B cell (primary cell): ENCODE measurements at regions of chr2 and their contacts with region 1.

Region 1: DNA sequence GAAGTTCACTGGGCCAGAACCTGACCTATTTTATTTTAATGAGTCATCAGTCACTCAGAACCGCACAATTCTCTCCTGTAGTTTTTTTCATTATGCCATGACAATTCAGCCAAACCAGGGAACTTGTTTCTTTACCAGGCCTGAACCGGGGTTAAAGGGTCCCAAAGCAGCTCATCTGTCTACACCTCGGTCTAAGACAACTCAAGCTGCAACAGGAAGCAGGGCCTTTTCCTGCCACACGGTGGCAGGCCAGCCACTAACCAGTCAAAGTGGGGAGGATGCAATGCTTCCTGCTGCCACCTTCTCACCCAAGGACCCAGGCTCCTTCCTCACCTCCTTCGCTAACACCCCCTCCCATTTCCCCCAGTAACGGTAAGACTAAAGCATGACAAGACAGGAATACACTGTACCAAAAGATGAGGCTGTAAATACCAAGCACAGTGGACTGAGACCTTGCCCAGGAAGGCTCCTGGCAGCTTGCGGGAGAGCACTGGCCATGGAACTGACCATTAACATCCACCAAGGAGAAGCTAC is 56.7 kb upstream of the ACKR3 start:
- DNase-seq: peak; percentile 80
- ATAC-seq: peak; percentile 96
- H3K4me3 ChIP-seq: no peak overlapping the region
- H3K4me3 Mint-ChIP-seq: no peak overlapping the region
- H3K27ac ChIP-seq: no peak overlapping the region
- H3K27ac Mint-ChIP-seq: no peak overlapping the region
- H3K4me1 ChIP-seq: peaks cover 13 to 15% of the 10 kb centered on the region in 2 donors
- H3K4me1 Mint-ChIP-seq: peaks cover 10% of the 10 kb centered on the region
- H3K27me3 ChIP-seq: peaks cover 0 to 11% (median 3%) of the 10 kb centered on the region in 4 experiments
- H3K27me3 Mint-ChIP-seq: peaks cover 16% of the 10 kb centered on the region
- CTCF ChIP-seq: peak; percentile 84

Region 2: DNA sequence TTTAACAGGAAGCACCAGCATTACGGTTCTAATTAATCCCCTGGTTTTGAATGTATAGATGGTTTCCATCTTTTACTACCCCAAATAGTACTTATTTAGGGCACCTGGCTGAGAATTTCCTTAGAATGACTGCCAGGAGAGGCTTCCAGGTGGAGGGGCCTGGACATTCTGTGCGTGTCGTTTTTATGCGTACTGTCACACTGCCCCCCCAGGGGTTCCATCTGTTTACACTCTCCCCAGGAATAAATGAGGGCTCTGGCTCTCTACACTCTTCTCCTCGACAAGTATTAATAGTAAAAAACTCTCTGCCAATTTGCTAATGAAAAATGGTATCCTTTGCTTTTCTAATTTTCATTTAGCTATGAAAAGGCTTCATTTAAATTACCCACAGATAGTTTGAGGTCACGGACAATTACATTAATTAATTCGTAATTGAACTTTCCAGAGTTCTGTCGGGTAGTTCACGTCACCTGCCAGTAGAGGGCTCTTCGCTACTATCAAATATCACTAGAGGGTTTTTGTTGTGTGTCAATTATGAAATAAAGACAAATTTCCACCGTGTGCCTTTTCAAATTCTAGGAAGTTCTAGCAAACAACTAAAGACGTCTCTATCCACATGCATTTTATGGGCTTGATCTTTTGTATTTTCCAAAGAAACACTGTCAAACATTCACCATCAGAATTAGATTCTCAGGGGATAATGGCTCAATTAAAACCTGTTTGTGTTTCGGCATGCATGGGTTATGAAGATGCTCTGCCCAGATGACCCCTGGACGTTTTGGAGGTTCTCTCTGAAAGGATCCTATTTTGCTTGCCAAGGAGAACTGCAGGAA is 160.0 kb before region 1 on chr2:
- CTCF ChIA-PET with region 1: interaction called, 6 read pairs
- POLR2A ChIA-PET with region 1: no interaction called
- intact Hi-C with region 1: loop called (anchors 1 kb)
- DNase-seq: peak; percentile 57
- ATAC-seq: peak; percentile 45
- H3K4me3 ChIP-seq: no peak overlapping the region
- H3K4me3 Mint-ChIP-seq: no peak overlapping the region
- H3K27ac ChIP-seq: no peak overlapping the region
- H3K27ac Mint-ChIP-seq: no peak overlapping the region
- H3K4me1 ChIP-seq: no peaks in the 10 kb centered on the region
- H3K4me1 Mint-ChIP-seq: no peaks in the 10 kb centered on the region
- H3K27me3 ChIP-seq: peaks cover 0 to 5% (median 0%) of the 10 kb centered on the region in 4 experiments
- H3K27me3 Mint-ChIP-seq: peaks cover 21% of the 10 kb centered on the region
- CTCF ChIP-seq: peak; percentile 98

Region 3: DNA sequence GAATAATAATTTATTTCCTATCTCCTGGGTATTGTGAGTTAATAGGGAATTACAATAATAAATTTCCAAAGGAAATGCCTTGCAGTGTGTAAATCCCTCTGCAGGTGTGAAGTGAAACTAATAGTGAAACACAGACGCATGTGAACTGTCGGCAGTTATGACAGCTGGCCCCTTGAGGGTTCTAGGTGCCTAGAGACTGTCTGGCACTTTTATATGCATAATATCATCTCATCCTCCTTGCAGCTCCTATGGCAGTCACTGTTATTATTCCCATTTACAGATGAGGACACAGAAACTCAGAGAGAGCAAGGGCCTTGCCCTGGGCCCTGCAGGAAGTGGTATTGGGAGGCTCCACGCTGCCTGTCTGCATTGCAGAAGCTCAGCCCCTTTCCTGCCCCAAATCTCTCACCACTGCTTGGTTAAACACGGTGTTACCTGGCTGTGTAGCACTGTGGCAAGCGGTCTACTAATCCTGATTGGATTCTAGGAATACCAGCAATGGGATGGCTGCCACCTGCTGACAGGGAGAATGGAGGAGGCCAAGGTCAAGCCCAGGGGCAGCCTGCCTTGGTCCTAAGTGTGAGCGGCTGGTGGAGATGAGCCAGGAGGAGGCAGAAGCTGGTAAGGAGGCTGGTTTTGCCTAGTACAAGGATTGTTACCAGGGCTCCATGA is 23.9 kb after region 1 on chr2:
- CTCF ChIA-PET with region 1: interaction called, 54 read pairs
- POLR2A ChIA-PET with region 1: no interaction called
- intact Hi-C with region 1: no loop called
- DNase-seq: peak; percentile 67
- ATAC-seq: peak; percentile 76
- H3K4me3 ChIP-seq: peak overlapping the region in 4 of 5 experiments; percentile 24 to 69 (median 49)
- H3K4me3 Mint-ChIP-seq: peak overlapping the region; percentile 87
- H3K27ac ChIP-seq: peak overlapping the region; percentile 61 to 77
- H3K27ac Mint-ChIP-seq: peak overlapping the region; percentile 94
- H3K4me1 ChIP-seq: peaks cover 30 to 41% of the 10 kb centered on the region in 2 donors
- H3K4me1 Mint-ChIP-seq: peaks cover 42% of the 10 kb centered on the region
- H3K27me3 ChIP-seq: no peaks in the 10 kb centered on the region
- H3K27me3 Mint-ChIP-seq: no peaks in the 10 kb centered on the region
- CTCF ChIP-seq: no peak

Region 4: DNA sequence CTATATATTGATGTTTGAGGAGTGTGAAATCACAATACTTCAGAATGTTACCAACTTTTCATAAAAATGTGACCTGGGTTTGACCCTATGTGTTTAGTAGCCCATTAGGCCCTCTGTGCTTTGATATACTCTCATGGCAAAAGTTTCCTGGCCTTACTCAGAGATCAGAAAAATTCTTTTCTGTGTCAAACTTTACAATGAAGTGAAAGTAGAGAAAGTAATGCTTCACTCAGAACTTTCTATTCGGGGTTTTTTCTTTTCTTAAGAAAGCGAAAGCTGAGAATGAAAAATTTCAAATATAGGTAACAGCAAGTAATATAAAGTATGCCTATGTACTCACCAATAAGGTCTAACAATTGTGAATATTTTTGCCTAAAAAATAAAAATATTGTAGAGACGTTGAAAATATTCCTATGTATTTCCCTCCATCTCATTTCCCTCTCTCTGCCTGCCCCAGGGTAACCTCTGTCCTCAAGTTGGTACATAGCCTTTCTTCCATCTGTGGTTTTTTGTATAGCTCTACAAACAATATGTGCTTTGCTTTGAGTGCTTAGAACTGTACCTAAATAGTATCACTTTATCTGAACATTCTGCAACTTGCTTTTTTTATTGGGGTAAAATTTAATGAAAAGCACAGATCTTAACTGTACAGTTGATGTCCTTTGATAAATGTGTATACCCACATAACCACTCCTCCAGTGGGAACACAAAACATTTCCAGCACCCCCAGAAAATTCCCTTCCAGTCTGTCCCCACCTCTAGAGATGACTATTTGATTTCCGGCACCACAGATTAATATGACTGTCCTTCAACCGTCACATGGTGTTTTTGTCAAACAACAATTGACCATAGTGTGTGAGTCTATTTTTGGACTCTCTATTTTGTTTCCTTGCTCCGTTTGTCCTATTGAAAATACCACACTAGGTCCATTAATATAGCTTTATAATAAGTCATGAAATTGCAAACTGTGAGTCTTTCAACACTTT is 46.3 kb after region 1 on chr2:
- CTCF ChIA-PET with region 1: interaction called, 41 read pairs
- POLR2A ChIA-PET with region 1: no interaction called
- intact Hi-C with region 1: no loop called
- DNase-seq: no peak
- ATAC-seq: no peak
- H3K4me3 ChIP-seq: no peak overlapping the region
- H3K4me3 Mint-ChIP-seq: no peak overlapping the region
- H3K27ac ChIP-seq: no peak overlapping the region
- H3K27ac Mint-ChIP-seq: no peak overlapping the region
- H3K4me1 ChIP-seq: peaks cover 15 to 20% of the 10 kb centered on the region in 2 donors
- H3K4me1 Mint-ChIP-seq: peaks cover 30% of the 10 kb centered on the region
- H3K27me3 ChIP-seq: no peaks in the 10 kb centered on the region
- H3K27me3 Mint-ChIP-seq: no peaks in the 10 kb centered on the region
- CTCF ChIP-seq: no peak

Region 5: DNA sequence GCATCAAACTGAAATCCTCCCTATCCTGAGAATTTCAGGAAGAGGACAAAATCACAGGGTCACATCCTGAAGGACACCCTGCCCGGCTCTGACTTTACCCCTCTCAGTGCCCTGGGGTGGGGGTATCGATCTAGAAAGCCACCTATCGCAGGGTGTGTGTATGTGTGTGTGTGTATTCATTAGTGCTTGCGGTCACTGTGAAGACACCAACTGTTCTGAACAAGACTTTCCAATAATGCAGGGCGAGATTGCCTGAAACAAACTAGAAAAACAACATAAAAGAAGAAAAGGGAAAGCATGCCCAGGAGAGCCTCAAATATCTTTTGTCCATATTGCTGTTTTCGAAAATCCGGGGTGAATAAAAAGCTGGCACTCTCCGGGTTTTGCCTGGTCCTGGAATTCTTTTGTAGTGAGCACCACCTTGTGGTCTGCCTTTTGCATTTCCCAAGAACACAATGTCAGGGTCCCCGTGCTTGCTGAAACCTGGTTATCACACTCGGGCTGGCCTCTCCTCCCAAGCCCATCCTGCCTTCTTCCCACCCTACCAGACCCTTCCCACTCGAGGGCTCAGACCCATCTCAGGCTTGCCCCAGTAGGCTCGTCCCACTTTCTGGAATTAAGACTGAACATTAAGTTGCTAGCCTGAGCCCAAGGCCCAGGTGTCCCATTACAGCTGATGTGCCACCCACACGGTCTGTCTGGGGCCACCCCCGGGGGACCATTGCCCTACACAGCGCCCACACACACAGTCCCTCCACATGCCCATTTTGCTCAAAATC is 547.8 kb after region 1 on chr2:
- CTCF ChIA-PET with region 1: interaction called, 18 read pairs
- POLR2A ChIA-PET with region 1: no interaction called
- intact Hi-C with region 1: no loop called
- DNase-seq: peak; percentile 56
- ATAC-seq: no peak
- H3K4me3 ChIP-seq: no peak overlapping the region
- H3K4me3 Mint-ChIP-seq: no peak overlapping the region
- H3K27ac ChIP-seq: no peak overlapping the region
- H3K27ac Mint-ChIP-seq: no peak overlapping the region
- H3K4me1 ChIP-seq: peaks cover 21 to 33% of the 10 kb centered on the region in 2 donors
- H3K4me1 Mint-ChIP-seq: peaks cover 36% of the 10 kb centered on the region
- H3K27me3 ChIP-seq: peaks cover 0 to 3% (median 0%) of the 10 kb centered on the region in 4 experiments
- H3K27me3 Mint-ChIP-seq: peaks cover 9% of the 10 kb centered on the region
- CTCF ChIP-seq: peak; percentile 55